PC-9 (cell line): ENCODE measurements at regions of chr14 and their contacts with region 1.

Region 1: GRCh38 chr14:20707622-20708021 is 19.1 kb downstream of the ANG start:
- DNase-seq: peak; percentile 43 to 87
- H3K4me3 ChIP-seq: no peak overlapping the region
- H3K27ac ChIP-seq: peak overlapping the region; percentile 87
- H3K4me1 ChIP-seq: 0 out of 2 replicates have a peak, but pooled peaks cover 10% of the 10 kb centered on the region
- H3K27me3 ChIP-seq: no peaks in the 10 kb centered on the region
- CTCF ChIP-seq: no peak

Region 2: GRCh38 chr14:20719777-20720176 is 12.2 kb after region 1 on chr14:
- CTCF ChIA-PET with region 1: no interaction called
- POLR2A ChIA-PET with region 1: interaction called, 10 read pairs
- intact Hi-C with region 1: no loop called
- DNase-seq: peak; percentile 31 to 80
- H3K4me3 ChIP-seq: no peak overlapping the region
- H3K27ac ChIP-seq: no peak overlapping the region
- H3K4me1 ChIP-seq: 0 out of 2 replicates have a peak, but pooled peaks cover 4% of the 10 kb centered on the region
- H3K27me3 ChIP-seq: no peaks in the 10 kb centered on the region
- CTCF ChIP-seq: no peak

Region 3: GRCh38 chr14:20742077-20742476 is 34.5 kb after region 1 on chr14:
- CTCF ChIA-PET with region 1: no interaction called
- POLR2A ChIA-PET with region 1: interaction called, 3 read pairs
- intact Hi-C with region 1: loop called (anchors 1 kb)
- DNase-seq: peak in 1 of 2 experiments; percentile 9
- H3K4me3 ChIP-seq: no peak overlapping the region
- H3K27ac ChIP-seq: no peak overlapping the region
- H3K4me1 ChIP-seq: peaks cover 7% of the 10 kb centered on the region; the same call in 1 of the 2 replicates
- H3K27me3 ChIP-seq: no peaks in the 10 kb centered on the region
- CTCF ChIP-seq: no peak

Region 4: DNA sequence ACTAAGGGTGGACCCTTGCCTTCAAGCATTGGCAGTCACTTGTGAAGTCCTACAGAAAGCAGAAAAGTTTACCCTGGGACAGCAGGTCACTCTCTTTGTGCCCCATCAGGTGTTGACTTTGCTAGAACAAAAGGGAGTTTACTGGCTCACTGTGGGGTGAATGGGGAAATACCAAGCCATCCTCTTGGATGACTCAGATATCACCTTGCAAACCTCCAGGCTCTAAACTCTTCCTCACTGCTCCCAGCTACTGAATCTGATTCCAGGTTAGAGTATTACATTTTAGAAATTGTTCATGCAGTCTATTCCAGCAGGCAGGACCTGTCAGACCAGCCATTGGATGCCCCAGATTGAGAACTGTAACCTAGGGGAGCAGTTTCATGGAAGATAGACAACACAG is 53.3 kb after region 1 on chr14:
- CTCF ChIA-PET with region 1: no interaction called
- POLR2A ChIA-PET with region 1: no interaction called
- intact Hi-C with region 1: loop called (anchors 5 kb)
- DNase-seq: peak; percentile 44 to 60
- H3K4me3 ChIP-seq: no peak overlapping the region
- H3K27ac ChIP-seq: no peak overlapping the region
- H3K4me1 ChIP-seq: peaks cover 7% of the 10 kb centered on the region
- H3K27me3 ChIP-seq: no peaks in the 10 kb centered on the region
- CTCF ChIP-seq: no peak